Colonic mucosa (tissue), 4 donors: ENCODE measurements at regions of chr5 and their contacts with region 1.

Region 1: GRCh38 chr5:138132543-138132942 is 6.7 kb downstream of the NME5 start:
- DNase-seq: no peak
- H3K4me3 ChIP-seq: no peak overlapping the region
- H3K27ac ChIP-seq: no peak overlapping the region
- H3K4me1 ChIP-seq: no peaks in the 10 kb centered on the region
- H3K27me3 ChIP-seq: no peaks in the 10 kb centered on the region
- CTCF ChIP-seq: no peak

Region 2: DNA sequence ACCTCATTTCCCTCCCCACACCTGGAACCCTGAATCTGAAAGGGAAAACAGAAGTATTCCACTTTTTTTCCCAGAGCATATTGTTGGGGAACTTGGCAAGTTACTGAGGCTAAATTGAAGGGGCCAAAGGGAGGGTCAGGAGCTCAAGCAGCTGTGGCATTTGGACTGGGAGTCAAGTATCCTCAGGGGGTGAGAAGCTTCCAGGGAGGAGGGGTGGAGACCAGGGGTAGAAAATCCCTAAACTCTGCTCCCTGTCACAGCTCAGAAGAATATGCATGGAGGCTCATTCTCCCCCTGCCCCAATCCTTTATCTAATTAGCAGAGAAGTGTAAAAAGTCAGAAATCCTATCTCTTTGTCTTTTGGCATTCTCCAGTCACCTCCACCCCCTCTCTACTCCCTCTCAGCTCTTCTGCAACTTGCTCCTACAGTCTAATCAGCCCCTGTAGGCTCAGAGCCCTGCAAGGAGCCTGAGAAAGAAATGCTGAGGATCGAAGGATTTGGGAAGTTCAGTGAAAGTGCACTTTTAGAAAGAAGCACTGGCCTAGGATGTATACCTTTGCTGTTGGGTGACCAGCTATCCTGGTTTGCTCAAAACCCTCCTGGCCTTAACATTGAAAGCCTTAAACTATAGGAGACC is 54.4 kb before region 1 on chr5:
- intact Hi-C with region 1: loop called (anchors 2 kb)
- DNase-seq: no peak
- H3K4me3 ChIP-seq: no peak overlapping the region
- H3K27ac ChIP-seq: no peak overlapping the region
- H3K4me1 ChIP-seq: no peaks in the 10 kb centered on the region
- H3K27me3 ChIP-seq: no peaks in the 10 kb centered on the region
- CTCF ChIP-seq: no peak